Heart left ventricle (tissue), 16 donors: ENCODE measurements at regions of chr6 and their contacts with region 1.

Region 1: GRCh38 chr6:167219967-167220512 is 62.3 kb upstream of the GPR31 start:
- DNase-seq: no peak
- ATAC-seq: no peak
- H3K4me3 ChIP-seq: no peak overlapping the region
- H3K27ac ChIP-seq: no peak overlapping the region
- H3K4me1 ChIP-seq: no peaks in the 10 kb centered on the region
- H3K27me3 ChIP-seq: peaks cover 0 to 1% (median 0%) of the 10 kb centered on the region in 9 donors
- CTCF ChIP-seq: no peak
- POLR2A ChIP-seq: no peak

Region 2: GRCh38 chr6:167130008-167130677 is 89.9 kb before region 1 on chr6:
- intact Hi-C with region 1: no loop called
- DNase-seq: no peak
- ATAC-seq: no peak
- H3K4me3 ChIP-seq: no peak overlapping the region
- H3K27ac ChIP-seq: peak overlapping the region in 1 of 12 donors; percentile 66
- H3K4me1 ChIP-seq: no peaks in the 10 kb centered on the region
- H3K27me3 ChIP-seq: no peaks in the 10 kb centered on the region
- CTCF ChIP-seq: no peak
- POLR2A ChIP-seq: no peak

Region 3: DNA sequence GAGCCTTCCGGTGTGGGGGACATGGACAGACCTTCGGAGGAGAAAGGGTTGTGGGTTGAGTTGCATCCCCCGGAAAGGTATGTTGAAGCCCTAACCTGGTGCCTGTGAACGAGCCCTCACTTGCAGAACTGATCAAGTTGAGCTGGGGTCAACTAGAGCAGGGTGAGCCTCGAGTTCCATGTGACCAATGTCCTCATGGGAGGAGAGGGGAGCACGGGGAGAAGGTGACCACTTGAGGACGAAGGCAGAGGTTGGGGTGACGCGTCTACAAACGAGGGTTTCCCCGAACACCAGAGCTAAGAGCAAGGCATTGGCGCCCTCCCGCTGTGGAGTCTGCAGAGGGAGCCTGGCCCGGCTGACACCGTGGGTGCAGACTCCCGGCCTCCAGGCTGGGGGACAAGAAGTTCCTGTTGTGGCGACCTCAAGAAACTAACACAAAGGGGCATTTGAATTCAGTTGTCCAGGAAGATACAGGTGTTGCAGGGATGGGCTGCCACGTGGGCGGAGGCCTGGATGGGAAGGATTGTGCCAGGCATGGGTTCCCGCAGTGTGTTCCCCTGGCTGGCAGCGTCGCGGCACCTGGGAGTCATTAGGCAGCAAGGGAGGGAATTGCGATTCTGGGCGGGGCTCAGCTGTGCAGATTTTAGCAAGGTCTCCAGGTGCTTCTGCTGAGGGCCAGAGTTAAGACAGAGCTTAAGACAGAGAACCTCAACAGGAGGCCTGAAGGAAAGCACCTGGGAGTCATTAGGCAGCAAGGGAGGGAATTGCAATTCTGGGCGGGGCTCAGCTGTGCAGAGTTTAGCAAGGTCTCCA is 50.7 kb after region 1 on chr6:
- intact Hi-C with region 1: loop called in 1 of 10 experiments (anchors 10 kb)
- DNase-seq: no peak
- ATAC-seq: peak in 1 of 4 donors; percentile 27
- H3K4me3 ChIP-seq: no peak overlapping the region
- H3K27ac ChIP-seq: no peak overlapping the region
- H3K4me1 ChIP-seq: no peaks in the 10 kb centered on the region
- H3K27me3 ChIP-seq: peaks cover 0 to 9% (median 0%) of the 10 kb centered on the region in 9 donors
- CTCF ChIP-seq: no peak
- POLR2A ChIP-seq: no peak

Region 4: DNA sequence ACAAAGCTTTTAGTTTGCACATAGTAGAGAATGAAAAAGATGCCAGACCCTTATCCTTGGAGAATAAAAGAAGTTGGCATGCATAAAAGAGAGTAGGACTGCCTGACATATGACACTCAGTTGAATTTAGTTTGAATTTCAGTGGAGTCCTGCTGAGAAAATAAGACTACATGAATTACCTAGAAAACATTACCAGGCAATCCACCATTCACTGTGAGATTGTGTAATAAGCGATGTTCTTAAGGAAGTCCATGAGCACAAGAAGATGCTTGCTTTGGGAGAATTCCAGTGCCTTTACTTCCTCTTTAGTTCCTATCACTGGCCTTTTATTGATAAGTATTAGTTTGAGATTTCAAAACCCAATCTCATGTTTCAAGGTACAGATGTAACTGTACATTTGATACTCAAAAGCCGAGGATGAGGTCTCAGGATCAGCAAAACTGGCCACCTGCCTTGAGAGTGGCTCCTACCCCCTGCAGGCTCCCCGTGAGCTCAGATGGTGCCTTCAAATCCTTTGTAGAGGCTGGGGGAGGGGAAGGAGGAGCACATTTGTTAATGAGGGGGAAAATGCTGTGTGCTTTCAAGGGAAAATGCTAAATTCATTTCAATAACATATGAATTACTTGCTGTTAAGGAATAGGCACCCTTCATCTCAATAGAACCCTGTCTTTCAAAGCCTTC is 59.9 kb after region 1 on chr6:
- intact Hi-C with region 1: loop called in 8 of 10 experiments (anchors 2 to 10 kb)
- DNase-seq: no peak
- ATAC-seq: no peak
- H3K4me3 ChIP-seq: no peak overlapping the region
- H3K27ac ChIP-seq: no peak overlapping the region
- H3K4me1 ChIP-seq: no peaks in the 10 kb centered on the region
- H3K27me3 ChIP-seq: peaks cover 0 to 22% (median 3%) of the 10 kb centered on the region in 9 donors
- CTCF ChIP-seq: no peak
- POLR2A ChIP-seq: no peak

Region 5: DNA sequence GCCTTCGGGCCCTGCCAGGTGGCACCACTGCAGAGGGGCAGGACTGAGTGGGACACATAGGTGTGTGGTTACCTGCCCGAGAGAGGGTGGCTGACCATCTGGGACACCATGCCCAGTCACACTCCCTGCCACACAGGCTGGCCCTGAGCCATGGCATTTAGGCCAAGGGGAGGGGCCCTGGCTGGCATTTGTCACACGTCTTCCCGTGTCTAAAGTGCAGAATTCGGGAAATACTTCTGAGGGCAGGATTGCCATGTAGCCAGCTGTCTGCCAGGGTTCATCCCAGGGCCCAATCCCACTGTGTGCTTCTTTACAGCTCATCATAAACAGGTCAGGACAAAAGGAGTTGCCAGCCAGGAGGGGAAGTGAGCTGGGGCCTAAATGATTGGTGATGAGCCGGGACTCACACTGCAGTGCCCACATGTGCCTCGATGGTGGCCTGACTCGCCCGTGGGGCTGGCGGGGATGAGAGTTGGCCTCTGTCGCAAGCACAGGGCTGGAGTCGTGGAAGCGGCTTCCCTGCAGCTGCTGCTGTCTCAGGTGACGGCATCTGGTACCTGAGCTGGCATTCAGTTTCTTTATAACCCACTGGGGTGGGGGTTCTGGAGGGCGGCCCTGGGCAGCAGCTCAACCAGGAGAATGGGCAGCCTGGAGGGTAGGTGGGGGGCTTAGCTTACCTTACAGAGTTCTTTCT is 65.2 kb after region 1 on chr6:
- intact Hi-C with region 1: loop called in 7 of 10 experiments (anchors 2 to 10 kb)
- DNase-seq: no peak
- ATAC-seq: peak in 1 of 4 donors; percentile 11
- H3K4me3 ChIP-seq: no peak overlapping the region
- H3K27ac ChIP-seq: no peak overlapping the region
- H3K4me1 ChIP-seq: no peaks in the 10 kb centered on the region
- H3K27me3 ChIP-seq: no peaks in the 10 kb centered on the region
- CTCF ChIP-seq: no peak
- POLR2A ChIP-seq: no peak

Region 6: GRCh38 chr6:167350731-167351655 is 131.0 kb after region 1 on chr6:
- intact Hi-C with region 1: loop called in 2 of 10 experiments (anchors 10 kb)
- DNase-seq: peak; percentile 41 to 82 (median 52)
- ATAC-seq: peak in 3 of 4 donors; percentile 74 to 86 (median 75)
- H3K4me3 ChIP-seq: peak overlapping the region; percentile 11 to 58 (median 48)
- H3K27ac ChIP-seq: peak overlapping the region in 10 of 12 donors; percentile 27 to 73 (median 48)
- H3K4me1 ChIP-seq: peaks cover 0 to 18% (median 11%) of the 10 kb centered on the region in 12 donors
- H3K27me3 ChIP-seq: peaks cover 0 to 43% (median 3%) of the 10 kb centered on the region in 9 donors
- CTCF ChIP-seq: peak; percentile 60 to 79 (median 68)
- POLR2A ChIP-seq: no peak